CD4-positive, alpha-beta memory T cell (primary cell): ENCODE measurements at regions of chr11 and their contacts with region 1.

Region 1: DNA sequence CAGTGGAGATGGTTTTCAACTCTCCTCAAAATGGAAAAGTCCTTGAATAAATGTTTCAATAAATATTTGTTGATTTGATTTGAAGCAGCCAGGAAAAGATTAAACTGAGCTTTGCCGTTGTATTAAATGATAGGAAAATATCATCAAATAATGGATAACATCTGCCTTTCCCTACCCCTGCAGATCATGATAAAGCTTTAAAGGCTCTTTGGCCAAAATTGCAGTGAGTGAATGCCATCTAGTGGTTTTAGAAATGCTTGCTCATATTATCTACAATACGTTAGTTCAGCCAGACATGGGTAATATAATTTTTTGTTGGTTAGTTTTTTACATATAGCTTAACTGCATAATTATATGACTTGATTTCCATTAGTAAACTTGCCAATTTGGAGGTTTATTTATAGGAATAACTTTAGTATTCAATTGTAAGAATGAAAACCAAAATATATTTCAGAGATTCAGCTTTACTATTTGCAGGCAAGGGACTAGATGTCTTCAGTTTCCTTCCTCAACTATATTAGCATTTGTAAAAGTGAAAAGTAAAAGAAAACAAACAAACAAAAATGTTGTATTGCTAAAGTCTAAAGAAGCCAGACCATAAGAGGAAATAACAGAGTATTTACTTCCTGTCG is 159.2 kb downstream of the MSANTD4 start:
- DNase-seq: peak in 4 of 5 donors; percentile 3 to 33 (median 26)
- H3K4me3 ChIP-seq: no peak overlapping the region
- H3K4me3 Mint-ChIP-seq: no peak overlapping the region
- H3K27ac ChIP-seq: no peak overlapping the region
- H3K27ac Mint-ChIP-seq: no peak overlapping the region
- H3K4me1 ChIP-seq: no peaks in the 10 kb centered on the region
- H3K4me1 Mint-ChIP-seq: no peaks in the 10 kb centered on the region
- H3K27me3 ChIP-seq: no peaks in the 10 kb centered on the region
- H3K27me3 Mint-ChIP-seq: peaks cover 5 to 6% of the 10 kb centered on the region in 2 donors

Region 2: DNA sequence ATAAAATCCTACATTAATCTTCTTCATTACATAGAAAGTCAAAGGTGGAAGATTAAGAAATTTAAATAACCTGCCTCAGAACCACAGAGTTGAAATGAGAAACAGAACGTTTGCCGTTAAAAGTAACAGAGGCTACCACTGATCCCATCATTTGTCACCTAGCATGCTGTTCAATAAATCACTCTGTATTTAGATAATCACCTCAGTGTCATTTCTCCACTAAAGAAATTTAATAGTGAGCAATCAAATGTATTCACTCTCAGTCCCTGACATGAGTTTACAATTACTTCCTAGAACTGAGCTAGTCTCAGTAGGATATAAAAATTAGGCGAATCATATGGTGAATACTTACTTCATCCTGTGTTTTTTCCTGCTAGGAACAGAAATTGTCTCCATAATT is 10.4 kb before region 1 on chr11:
- CTCF ChIA-PET with region 1: interaction called, 17 read pairs
- POLR2A ChIA-PET with region 1: no interaction called
- intact Hi-C with region 1: no loop called
- DNase-seq: no peak
- H3K4me3 ChIP-seq: no peak overlapping the region
- H3K4me3 Mint-ChIP-seq: no peak overlapping the region
- H3K27ac ChIP-seq: no peak overlapping the region
- H3K27ac Mint-ChIP-seq: no peak overlapping the region
- H3K4me1 ChIP-seq: no peaks in the 10 kb centered on the region
- H3K4me1 Mint-ChIP-seq: no peaks in the 10 kb centered on the region
- H3K27me3 ChIP-seq: no peaks in the 10 kb centered on the region
- H3K27me3 Mint-ChIP-seq: peaks cover 4 to 5% of the 10 kb centered on the region in 2 donors